ENCODE measurements at regions of chr5 and their contacts with region 1.

Region 1: GRCh38 chr5:135466178-135467050 is 14.3 kb upstream of the TIFAB start:
- DNase-seq: peak; percentile 82
- H3K4me3 Mint-ChIP-seq: no peak overlapping the region
- H3K27ac Mint-ChIP-seq: no peak overlapping the region
- H3K4me1 Mint-ChIP-seq: peaks cover 5% of the 10 kb centered on the region
- H3K27me3 Mint-ChIP-seq: peaks cover 30% of the 10 kb centered on the region

Region 2: DNA sequence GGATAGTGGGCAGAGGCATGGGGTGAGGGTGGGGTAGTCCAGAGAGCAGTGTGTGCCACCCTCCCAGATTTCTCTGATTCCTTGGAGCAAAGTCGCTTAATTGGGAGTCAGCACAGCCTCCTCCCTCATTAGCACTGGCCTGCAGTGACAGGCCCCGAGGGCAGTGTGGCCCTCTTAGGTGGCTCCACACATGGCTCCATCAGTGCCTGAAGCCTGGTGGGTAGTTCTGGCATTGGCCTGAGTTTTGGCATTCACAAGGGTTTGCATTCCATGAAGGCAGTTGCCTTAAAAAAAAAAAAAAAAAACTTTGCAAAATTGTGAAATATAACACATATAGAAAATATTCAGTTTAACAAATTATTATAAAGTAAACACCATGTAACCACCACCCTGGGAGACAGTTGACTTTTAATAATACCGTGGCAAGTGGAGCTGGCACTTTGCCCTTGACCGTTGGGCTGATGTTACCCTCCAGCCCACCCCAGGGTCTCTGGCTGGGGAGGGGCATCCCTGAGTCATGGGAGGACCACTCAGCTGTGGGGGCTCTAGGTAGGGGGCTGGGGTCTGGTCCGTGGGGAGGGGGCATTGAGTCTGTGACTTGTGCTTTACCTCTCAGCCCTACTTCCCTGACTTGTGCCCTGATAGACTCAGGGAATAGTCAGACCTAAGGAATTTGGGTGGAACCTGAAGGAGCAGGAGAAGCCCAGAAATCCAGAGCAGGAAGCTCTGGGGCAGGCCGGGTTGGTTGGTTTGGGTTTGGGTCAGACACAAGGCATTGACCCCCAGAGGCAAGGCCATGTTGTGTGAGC is 381.1 kb before region 1 on chr5:
- CTCF ChIA-PET with region 1: no interaction called
- POLR2A ChIA-PET with region 1: no interaction called
- intact Hi-C with region 1: no loop called
- DNase-seq: no peak
- H3K4me3 Mint-ChIP-seq: no peak overlapping the region
- H3K27ac Mint-ChIP-seq: no peak overlapping the region
- H3K4me1 Mint-ChIP-seq: no peaks in the 10 kb centered on the region
- H3K27me3 Mint-ChIP-seq: peaks cover 19% of the 10 kb centered on the region

Region 3: DNA sequence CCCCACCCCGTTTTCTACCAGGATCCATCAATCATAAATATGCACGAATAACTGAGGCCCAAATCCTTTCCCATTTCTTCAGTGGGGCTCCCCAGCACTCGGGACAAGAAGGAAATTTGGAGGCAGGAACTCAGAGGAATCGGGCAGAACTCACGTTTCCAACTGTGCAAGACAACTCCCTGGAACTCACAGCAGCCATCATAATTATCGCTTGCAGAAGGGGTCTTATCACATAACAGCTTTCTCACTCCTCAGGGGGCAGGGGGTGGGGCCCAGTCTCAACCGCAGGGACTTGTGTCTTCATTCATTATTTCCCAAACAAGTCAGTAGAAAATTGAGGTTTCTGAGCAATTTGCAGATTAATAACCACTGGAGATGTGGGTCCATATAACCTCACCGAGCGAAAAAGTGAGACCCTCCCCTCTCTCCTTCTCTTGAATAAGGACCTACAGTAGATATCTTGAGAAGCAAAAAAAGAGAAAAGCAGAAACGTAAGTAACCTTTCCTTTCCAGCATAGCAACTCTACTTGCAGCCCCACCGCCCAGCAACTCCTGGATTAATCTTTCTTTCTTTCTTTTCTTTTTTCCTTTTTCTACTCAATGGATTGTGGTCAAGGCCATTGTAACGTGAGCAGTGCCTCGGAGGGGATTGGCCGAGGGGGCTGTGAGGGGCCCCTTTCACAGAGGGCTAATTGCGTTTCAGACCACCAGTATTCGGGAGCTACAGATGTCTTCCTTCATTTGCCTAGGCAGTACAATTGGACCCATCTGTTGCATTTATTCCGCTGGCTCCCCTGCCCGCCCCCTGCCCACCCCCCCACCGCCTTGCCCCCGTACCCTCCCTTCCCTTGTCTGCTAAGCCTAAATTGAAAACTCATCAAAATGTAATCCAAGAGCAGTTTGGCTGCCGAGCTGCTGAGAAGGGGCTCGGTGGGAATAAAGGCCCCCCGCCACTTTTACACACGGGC is 10.5 kb after region 1 on chr5:
- CTCF ChIA-PET with region 1: interaction called, 12 read pairs
- POLR2A ChIA-PET with region 1: no interaction called
- intact Hi-C with region 1: no loop called
- DNase-seq: no peak
- H3K4me3 Mint-ChIP-seq: no peak overlapping the region
- H3K27ac Mint-ChIP-seq: no peak overlapping the region
- H3K4me1 Mint-ChIP-seq: no peaks in the 10 kb centered on the region
- H3K27me3 Mint-ChIP-seq: peaks cover 4% of the 10 kb centered on the region

Region 4: DNA sequence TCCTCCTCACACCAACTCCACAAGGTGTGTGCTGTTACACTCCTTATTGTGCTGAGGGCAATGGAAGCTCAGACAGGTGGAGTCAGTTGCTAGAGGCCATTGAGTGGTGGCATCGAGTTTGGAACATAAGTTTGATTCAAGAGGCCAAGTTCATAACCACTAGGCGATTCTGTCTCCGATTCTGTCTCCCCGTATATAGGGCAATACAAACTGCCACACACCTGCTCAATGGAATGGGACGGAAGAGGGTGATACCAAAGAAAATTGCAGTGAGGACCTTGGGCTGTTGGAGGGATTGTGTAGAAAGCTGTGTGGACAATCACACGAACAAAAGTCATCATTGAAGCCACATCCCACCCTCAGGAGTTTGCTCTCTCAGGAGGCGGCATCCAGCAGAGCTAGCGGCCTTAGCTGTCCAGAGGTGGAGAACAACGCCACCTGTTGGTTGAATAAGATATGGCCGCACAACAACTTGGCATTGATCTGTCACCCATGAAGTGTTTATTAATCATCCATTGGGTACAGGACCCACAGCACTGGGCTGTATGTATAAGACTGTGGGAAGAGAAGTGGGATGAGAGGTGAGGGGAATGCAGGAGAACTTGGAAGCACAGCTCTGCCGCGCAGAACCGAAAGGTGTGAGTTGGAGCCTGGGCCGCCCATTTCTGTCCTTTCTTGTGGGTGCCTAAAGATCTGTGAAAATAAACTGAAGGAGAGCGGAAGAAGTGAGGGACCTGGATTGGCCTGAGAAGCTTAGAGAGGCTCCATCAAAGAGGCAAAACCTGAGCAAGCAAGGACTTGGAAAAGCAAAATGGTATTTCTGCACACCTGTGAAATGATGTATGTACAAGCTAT is 85.4 kb after region 1 on chr5:
- CTCF ChIA-PET with region 1: interaction called, 434 read pairs
- POLR2A ChIA-PET with region 1: interaction called, 6 read pairs
- intact Hi-C with region 1: loop called (anchors 1 kb)
- DNase-seq: peak; percentile 73
- H3K4me3 Mint-ChIP-seq: no peak overlapping the region
- H3K27ac Mint-ChIP-seq: no peak overlapping the region
- H3K4me1 Mint-ChIP-seq: no peaks in the 10 kb centered on the region
- H3K27me3 Mint-ChIP-seq: peaks cover 54% of the 10 kb centered on the region

Region 5: GRCh38 chr5:135560858-135561257 is 94.4 kb after region 1 on chr5:
- CTCF ChIA-PET with region 1: interaction called, 434 read pairs
- POLR2A ChIA-PET with region 1: no interaction called
- intact Hi-C with region 1: no loop called
- DNase-seq: peak; percentile 84
- H3K4me3 Mint-ChIP-seq: no peak overlapping the region
- H3K27ac Mint-ChIP-seq: no peak overlapping the region
- H3K4me1 Mint-ChIP-seq: peaks cover 5% of the 10 kb centered on the region
- H3K27me3 Mint-ChIP-seq: peaks cover 24% of the 10 kb centered on the region

Region 6: DNA sequence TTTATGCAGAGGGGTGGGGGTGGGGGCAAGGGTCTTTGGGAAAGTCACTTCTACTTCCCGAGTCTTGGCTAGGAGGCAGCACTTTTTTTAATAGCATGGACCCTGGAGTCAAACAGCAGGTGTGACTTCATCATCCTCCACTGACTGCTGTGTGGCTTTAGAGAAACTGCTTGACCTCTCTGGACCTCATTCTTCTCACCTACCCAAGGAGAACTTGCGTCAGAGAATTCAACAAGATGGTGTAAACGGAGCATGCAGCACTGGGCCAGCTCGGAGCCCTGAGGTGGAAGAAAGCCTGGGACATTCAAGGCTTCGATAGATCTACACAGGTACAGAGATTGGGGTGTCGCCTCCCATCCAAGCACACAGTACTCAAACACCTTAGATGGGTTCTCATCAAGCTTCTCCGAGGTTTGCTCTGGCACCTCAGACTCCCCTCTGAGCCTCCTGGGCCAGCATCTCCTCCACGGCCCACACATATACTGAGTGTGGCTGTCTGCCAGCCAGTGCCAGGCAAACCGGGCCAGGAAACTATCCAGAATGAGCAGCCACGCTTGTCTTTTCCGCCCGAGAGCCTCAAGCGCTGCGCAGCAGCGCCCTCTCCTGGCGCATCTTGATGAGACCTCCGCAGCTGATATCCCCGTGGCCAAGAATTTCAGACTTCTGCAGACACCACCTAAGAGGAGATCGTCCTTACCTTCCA is 363.4 kb after region 1 on chr5:
- CTCF ChIA-PET with region 1: interaction called, 6 read pairs
- POLR2A ChIA-PET with region 1: no interaction called
- intact Hi-C with region 1: loop called (anchors 10 kb)
- DNase-seq: peak; percentile 64
- H3K4me3 Mint-ChIP-seq: no peak overlapping the region
- H3K27ac Mint-ChIP-seq: no peak overlapping the region
- H3K4me1 Mint-ChIP-seq: peaks cover 6% of the 10 kb centered on the region
- H3K27me3 Mint-ChIP-seq: peaks cover 41% of the 10 kb centered on the region